Psoas muscle (tissue), 8 donors: ENCODE measurements at regions of chr6 and their contacts with region 1.

Region 1: DNA sequence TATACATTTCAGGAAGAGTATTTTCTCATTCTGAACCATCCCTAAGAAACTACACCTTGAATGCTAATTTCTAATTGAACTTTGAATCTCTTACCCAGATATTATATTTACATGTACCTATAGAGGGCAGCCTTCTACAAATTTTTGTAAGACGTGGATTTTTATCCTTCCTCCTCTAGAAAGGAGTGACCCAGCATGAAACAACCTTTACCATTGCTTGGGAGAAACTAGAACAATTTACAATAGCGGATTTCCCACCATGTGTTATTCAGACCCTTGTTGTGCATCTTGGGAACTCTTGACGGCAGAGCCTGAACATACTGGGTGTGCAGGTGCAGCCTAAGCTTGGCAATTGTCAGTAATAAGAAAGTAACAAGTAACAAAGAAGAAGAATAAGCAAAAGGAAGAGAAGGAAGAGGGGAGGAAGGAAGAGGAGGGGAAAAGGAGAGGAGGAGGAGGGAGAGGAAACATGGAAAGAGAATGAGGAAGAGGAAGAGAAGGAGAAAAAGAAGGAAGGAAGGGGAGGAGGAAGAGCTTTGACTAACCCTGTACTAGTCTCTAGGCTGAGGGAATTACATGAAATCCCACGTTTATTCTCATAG is 10.8 kb upstream of the TAAR1 start:
- DNase-seq: no peak
- ATAC-seq: peak in 2 of 4 donors; percentile 44 to 59
- H3K4me3 ChIP-seq: no peak overlapping the region
- H3K27ac ChIP-seq: no peak overlapping the region
- H3K4me1 ChIP-seq: no peaks in the 10 kb centered on the region
- H3K27me3 ChIP-seq: no peaks in the 10 kb centered on the region
- CTCF ChIP-seq: peak; percentile 39

Region 2: DNA sequence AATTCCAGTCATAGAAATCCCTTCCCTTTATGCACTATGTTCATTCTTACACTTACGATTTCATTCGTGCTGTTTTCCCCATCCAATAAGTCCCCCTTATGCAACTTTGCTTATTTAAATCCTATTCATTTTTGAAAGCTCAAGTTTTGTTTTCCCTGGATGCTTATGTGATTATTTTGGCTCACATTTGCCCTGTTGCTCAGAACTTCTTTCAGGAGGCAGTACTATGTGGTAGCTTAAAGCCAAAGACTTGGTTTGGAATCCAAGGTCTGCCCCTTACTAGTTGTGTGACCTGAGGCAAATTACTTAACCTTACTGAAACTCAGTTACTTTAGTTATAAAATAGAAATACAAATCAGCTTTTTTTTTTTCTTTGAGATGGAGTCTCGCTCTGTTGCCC is 328.1 kb before region 1 on chr6:
- intact Hi-C with region 1: no loop called
- DNase-seq: no peak
- ATAC-seq: no peak
- H3K4me3 ChIP-seq: no peak overlapping the region
- H3K27ac ChIP-seq: no peak overlapping the region
- H3K4me1 ChIP-seq: no peaks in the 10 kb centered on the region
- H3K27me3 ChIP-seq: no peaks in the 10 kb centered on the region
- CTCF ChIP-seq: no peak

Region 3: DNA sequence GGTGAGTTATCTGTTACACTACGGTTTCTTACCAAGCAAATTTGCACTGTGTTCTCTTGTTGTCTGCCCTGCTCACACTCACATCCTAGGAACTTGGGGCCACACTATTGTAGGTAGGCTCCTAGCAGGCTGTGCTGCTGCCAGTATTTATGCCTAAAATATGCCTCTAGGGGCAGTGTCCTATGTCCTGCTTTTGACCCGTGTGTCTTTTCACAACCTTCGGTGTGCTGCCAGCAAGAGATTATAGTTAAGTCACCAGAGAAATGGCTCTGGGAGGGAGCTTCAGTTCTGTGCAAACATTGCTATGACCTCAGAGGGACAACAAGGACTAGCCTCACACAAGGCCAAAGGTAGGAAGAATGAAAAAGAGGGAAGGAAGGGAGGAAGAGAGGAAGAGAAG is 71.3 kb before region 1 on chr6:
- intact Hi-C with region 1: no loop called
- DNase-seq: no peak
- ATAC-seq: no peak
- H3K4me3 ChIP-seq: no peak overlapping the region
- H3K27ac ChIP-seq: no peak overlapping the region
- H3K4me1 ChIP-seq: no peaks in the 10 kb centered on the region
- H3K27me3 ChIP-seq: peaks cover 0 to 3% (median 0%) of the 10 kb centered on the region in 3 donors
- CTCF ChIP-seq: no peak

Region 4: DNA sequence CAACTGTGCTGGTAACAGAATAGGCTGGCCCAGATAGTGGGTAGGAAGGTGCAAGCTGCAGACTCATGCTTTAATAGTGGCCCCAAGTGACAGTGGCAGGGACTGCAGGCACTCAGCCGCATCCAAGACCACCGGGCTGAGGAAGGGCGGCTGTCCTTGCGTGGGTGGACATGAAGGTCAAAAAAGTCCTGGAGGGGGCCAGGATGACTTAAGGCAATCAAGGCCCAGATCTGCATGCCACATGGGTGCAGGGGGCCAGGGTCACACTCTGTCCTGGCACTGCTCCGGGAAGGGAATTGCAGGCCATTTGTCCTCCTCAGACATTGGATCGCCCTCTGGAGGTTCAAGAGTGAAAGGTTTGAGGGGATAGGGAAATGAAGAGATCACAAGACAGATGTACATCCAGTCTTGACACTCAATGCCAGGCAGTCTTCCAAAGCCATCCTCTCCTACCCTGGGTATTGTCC is 98.3 kb after region 1 on chr6:
- intact Hi-C with region 1: loop called in 1 of 2 experiments (anchors 10 kb)
- DNase-seq: no peak
- ATAC-seq: peak in 2 of 4 donors; percentile 46 to 60
- H3K4me3 ChIP-seq: no peak overlapping the region
- H3K27ac ChIP-seq: no peak overlapping the region
- H3K4me1 ChIP-seq: no peaks in the 10 kb centered on the region
- H3K27me3 ChIP-seq: no peaks in the 10 kb centered on the region
- CTCF ChIP-seq: peak; percentile 3

Region 5: GRCh38 chr6:132798869-132799538 is 129.2 kb after region 1 on chr6:
- intact Hi-C with region 1: loop called in 1 of 2 experiments (anchors 5 kb)
- DNase-seq: peak; percentile 50 to 76
- ATAC-seq: peak; percentile 84 to 93 (median 89)
- H3K4me3 ChIP-seq: peak overlapping the region; percentile 72
- H3K27ac ChIP-seq: no peak overlapping the region
- H3K4me1 ChIP-seq: no peaks in the 10 kb centered on the region
- H3K27me3 ChIP-seq: no peaks in the 10 kb centered on the region
- CTCF ChIP-seq: peak; percentile 72